ENCODE measurements at regions of chr11 and their contacts with region 1.

Region 1: GRCh38 chr11:74739546-74740270 is 8.5 kb upstream of the CHRDL2 start:
- DNase-seq: peak in 7 of 9 experiments; percentile 17 to 75 (median 51)
- ATAC-seq: peak; percentile 90
- H3K4me3 ChIP-seq: no peak overlapping the region
- H3K4me3 Mint-ChIP-seq: no peak overlapping the region
- H3K27ac ChIP-seq: no peak overlapping the region
- H3K27ac Mint-ChIP-seq: no peak overlapping the region
- H3K4me1 ChIP-seq: peaks cover 6% of the 10 kb centered on the region
- H3K4me1 Mint-ChIP-seq: peaks cover 5% of the 10 kb centered on the region
- H3K27me3 ChIP-seq: no peaks in the 10 kb centered on the region
- H3K27me3 Mint-ChIP-seq: peaks cover 25% of the 10 kb centered on the region
- CTCF ChIP-seq: peak; percentile 94

Region 2: DNA sequence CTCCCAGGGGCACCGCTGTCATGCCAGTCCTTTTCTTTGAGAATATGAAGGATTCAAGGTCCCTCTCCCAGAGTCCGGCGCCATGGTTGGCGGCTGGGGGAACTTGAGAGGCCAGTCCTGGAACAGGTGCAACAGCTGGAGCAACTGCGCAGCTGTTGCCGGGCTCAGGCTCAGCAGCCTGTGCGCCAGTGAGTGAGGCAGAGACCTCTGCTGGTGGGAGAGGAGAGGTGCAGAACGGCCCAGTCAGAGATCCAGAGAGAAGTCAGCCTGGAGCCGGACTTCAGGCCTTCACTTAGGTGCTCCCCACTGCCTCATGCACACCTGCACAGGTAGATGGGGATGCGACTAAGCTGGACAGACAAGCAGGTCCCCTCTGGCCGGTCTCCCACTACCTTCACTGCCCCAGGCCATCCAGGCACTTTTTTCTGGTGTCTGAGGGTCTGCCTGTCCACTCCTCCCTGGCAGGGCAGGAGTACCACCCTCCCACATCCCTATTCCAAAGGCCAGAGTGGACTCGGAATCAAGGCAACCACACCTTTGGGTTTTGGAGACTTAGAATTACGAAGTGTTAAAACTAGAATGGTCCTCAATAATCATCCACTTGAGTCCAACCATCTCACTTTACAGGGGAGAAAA is 13.0 kb before region 1 on chr11:
- CTCF ChIA-PET with region 1: interaction called, 54 read pairs
- POLR2A ChIA-PET with region 1: no interaction called
- intact Hi-C with region 1: no loop called
- DNase-seq: peak; percentile 25 to 72 (median 54)
- ATAC-seq: peak; percentile 96
- H3K4me3 ChIP-seq: no peak overlapping the region
- H3K4me3 Mint-ChIP-seq: no peak overlapping the region
- H3K27ac ChIP-seq: no peak overlapping the region
- H3K27ac Mint-ChIP-seq: no peak overlapping the region
- H3K4me1 ChIP-seq: peaks cover 3% of the 10 kb centered on the region
- H3K4me1 Mint-ChIP-seq: peaks cover 9% of the 10 kb centered on the region
- H3K27me3 ChIP-seq: peaks cover 0 to 3% of the 10 kb centered on the region in 2 experiments
- H3K27me3 Mint-ChIP-seq: peaks cover 27% of the 10 kb centered on the region
- CTCF ChIP-seq: peak; percentile 87

Region 3: DNA sequence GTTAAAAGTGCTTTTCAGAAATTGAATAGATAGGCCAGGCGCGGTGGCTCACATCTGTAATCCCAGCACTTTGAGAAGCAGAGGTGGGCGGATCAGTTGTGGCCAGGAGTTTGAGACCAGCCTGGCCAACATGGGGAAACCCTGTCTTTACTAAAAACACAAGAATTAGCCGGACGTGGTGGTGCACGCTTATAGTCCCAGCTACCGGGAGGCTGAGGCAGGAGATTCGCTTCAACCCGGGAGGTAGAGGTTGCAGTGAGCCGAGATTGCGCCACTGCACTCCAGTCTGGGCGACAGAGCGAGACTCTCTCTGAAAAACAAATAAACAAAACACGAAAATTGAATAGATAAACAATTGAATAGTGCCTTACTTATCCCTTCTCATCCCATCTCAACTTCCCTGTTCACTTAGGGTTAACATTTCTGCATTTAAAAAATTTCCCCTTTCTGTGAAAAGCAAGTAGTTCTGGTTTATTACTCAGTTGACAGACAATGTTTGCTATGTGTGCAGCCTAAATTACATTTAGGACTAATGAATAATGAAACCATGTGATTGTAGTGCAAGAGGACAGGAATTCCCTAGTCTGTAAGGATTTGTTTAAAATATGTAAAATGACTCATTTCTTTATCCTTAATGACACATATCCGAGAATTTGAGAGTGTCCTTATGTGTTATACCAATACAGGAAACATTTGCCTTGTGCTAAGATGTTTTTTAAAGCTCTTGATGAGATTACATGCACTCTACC is 15.0 kb after region 1 on chr11:
- CTCF ChIA-PET with region 1: interaction called, 18 read pairs
- POLR2A ChIA-PET with region 1: interaction called, 3 read pairs
- intact Hi-C with region 1: no loop called
- DNase-seq: no peak
- ATAC-seq: no peak
- H3K4me3 ChIP-seq: no peak overlapping the region
- H3K4me3 Mint-ChIP-seq: no peak overlapping the region
- H3K27ac ChIP-seq: no peak overlapping the region
- H3K27ac Mint-ChIP-seq: no peak overlapping the region
- H3K4me1 ChIP-seq: peaks cover 7% of the 10 kb centered on the region
- H3K4me1 Mint-ChIP-seq: peaks cover 40% of the 10 kb centered on the region
- H3K27me3 ChIP-seq: no peaks in the 10 kb centered on the region
- H3K27me3 Mint-ChIP-seq: no peaks in the 10 kb centered on the region
- CTCF ChIP-seq: no peak

Region 4: GRCh38 chr11:74948898-74949747 is 209.4 kb after region 1 on chr11 and contains the starts of genes SPCS2 and XRRA1:
- CTCF ChIA-PET with region 1: no interaction called
- POLR2A ChIA-PET with region 1: no interaction called
- intact Hi-C with region 1: no loop called
- DNase-seq: peak; percentile 95 to 99 (median 97)
- ATAC-seq: peak; percentile 95
- H3K4me3 ChIP-seq: peak within 1 kb of the TSS; percentile 86 to 90
- H3K4me3 Mint-ChIP-seq: peak within 1 kb of the TSS; percentile 92
- H3K27ac ChIP-seq: peak within 1 kb of the TSS; percentile 80 to 88
- H3K27ac Mint-ChIP-seq: peak within 1 kb of the TSS; percentile 95
- H3K4me1 ChIP-seq: peaks cover 31% of the 10 kb centered on the region
- H3K4me1 Mint-ChIP-seq: peaks cover 63% of the 10 kb centered on the region
- H3K27me3 ChIP-seq: no peaks in the 10 kb centered on the region
- H3K27me3 Mint-ChIP-seq: no peaks in the 10 kb centered on the region
- CTCF ChIP-seq: no peak
- total RNA-seq, gene SPCS2: 38.1 to 42.3 TPM
- total RNA-seq, gene XRRA1: 19.2 to 20.9 TPM

Measured in CD8-positive, alpha-beta T cell (primary cell).